Sigmoid colon (tissue), 7 donors: ENCODE measurements at regions of chr19 and their contacts with region 1.

Region 1: DNA sequence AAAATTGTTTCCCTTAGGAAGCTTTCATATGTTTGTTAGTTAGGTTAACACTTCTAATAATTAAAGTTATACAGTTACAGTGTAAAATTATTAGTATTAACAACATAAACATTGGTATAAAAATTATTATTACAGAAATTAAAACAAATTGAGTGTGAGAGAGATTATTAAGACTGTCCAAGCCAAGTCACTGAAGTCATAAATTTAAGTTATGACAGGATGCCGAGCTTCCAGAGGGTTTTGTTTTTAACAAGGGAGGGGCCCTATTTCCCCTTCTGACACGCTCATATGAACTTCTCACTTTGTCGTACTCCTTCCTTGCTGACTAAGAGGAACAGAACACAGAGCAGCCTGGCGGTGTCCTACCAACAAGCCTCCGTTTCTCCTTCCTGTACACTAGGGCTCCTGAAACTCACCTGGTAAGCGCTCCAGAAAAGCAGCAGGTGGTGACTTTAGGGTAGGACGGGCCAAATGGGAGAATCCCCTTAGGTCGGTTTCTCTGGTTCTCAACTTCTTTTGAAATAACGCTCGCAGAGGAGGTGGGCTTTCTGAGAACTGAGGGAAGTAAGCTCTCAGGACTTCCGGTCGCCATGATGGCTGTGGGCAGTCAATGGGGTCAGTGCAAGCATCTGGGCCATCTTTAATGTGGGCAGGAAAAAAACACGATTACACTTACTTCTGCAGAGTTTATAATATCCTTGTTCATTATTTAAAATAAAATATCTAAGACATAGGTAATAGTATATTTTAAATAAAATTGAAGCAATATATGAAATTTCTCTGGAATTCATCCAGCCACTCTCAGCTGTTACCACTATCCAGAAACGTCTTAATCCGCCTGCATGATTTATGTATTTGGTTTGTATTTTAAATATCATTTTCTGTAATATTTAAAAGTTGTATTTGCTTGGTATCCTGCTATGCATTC is at the start of gene CARD8:
- DNase-seq: peak; percentile 89
- H3K4me3 ChIP-seq: peak within 1 kb of the TSS; percentile 41 to 63 (median 59)
- H3K27ac ChIP-seq: peak within 1 kb of the TSS; percentile 88 to 90 (median 88)
- H3K4me1 ChIP-seq: peaks cover 0 to 27% (median 18%) of the 10 kb centered on the region in 4 donors
- H3K27me3 ChIP-seq: no peaks in the 10 kb centered on the region
- CTCF ChIP-seq: peak in 2 of 4 experiments; percentile 20 to 46
- EP300 ChIP-seq: no peak
- POLR2A ChIP-seq: peak; percentile 18 to 26
- total RNA-seq, gene CARD8: 14.2 to 37.7 (median 24.7) TPM

Region 2: DNA sequence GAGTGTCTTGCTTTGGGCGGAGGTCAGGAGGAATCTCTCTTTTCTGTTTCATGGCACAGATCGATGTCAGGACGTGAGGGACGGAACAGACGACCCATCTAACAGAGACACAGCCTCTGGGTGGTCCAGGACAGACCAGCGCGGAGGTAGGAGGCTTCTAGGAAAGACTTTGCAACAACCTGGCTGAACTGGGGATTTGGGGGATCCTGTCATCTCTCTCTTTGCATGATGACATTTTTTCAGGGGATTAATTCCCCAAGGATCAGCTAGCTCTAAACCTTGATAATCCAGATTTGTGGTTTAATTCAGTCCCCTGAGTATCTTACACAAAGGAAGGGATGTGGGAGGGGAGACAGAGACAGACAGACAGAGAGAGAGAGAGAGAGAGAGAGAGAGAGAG is 226.2 kb before region 1 on chr19:
- intact Hi-C with region 1: no loop called
- DNase-seq: no peak
- H3K4me3 ChIP-seq: no peak overlapping the region
- H3K27ac ChIP-seq: no peak overlapping the region
- H3K4me1 ChIP-seq: no peaks in the 10 kb centered on the region
- H3K27me3 ChIP-seq: peaks cover 2 to 14% (median 6%) of the 10 kb centered on the region in 3 donors
- CTCF ChIP-seq: no peak
- EP300 ChIP-seq: no peak
- POLR2A ChIP-seq: no peak

Region 3: DNA sequence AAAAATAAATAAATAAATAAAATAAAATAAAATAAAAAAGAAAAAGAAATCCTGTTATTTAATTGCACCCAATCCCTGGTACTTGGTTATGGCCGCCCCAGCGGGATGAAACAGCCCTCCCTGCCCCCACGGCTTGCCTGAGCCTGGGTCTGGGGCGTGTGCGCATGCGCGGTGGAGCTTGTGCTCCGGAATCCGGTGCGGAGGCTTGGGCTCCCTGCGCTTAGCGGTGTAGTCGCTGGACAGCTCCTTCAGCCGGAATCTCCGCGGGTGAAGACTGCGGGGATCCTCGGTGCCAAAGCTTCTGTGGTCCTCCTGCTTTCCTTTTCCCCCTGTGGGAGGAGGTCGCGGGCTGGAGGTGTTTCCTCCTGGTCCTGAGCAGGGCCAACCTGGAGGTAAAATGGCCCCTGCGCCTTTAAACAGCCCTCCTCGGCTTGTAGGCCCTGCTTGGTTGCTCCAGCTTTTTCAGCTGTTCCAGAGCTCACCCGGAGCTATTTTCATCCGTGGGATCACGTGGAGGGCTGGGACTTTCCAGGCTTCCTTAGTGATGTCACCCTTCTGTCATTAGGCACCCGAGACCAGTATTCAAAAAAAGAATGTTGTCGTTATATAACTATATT is 145.2 kb before region 1 on chr19 and contains the start of gene PLA2G4C:
- intact Hi-C with region 1: loop called (anchors 5 kb)
- DNase-seq: peak; percentile 96
- H3K4me3 ChIP-seq: peak within 1 kb of the TSS; percentile 30 to 56 (median 48)
- H3K27ac ChIP-seq: peak within 1 kb of the TSS; percentile 89 to 95 (median 94)
- H3K4me1 ChIP-seq: peaks cover 0 to 32% (median 28%) of the 10 kb centered on the region in 4 donors
- H3K27me3 ChIP-seq: no peaks in the 10 kb centered on the region
- CTCF ChIP-seq: no peak
- EP300 ChIP-seq: peak in 1 of 4 donors; percentile 75
- POLR2A ChIP-seq: peak; percentile 24 to 51
- total RNA-seq, gene PLA2G4C: 11.8 to 18.5 (median 13.1) TPM

Region 4: DNA sequence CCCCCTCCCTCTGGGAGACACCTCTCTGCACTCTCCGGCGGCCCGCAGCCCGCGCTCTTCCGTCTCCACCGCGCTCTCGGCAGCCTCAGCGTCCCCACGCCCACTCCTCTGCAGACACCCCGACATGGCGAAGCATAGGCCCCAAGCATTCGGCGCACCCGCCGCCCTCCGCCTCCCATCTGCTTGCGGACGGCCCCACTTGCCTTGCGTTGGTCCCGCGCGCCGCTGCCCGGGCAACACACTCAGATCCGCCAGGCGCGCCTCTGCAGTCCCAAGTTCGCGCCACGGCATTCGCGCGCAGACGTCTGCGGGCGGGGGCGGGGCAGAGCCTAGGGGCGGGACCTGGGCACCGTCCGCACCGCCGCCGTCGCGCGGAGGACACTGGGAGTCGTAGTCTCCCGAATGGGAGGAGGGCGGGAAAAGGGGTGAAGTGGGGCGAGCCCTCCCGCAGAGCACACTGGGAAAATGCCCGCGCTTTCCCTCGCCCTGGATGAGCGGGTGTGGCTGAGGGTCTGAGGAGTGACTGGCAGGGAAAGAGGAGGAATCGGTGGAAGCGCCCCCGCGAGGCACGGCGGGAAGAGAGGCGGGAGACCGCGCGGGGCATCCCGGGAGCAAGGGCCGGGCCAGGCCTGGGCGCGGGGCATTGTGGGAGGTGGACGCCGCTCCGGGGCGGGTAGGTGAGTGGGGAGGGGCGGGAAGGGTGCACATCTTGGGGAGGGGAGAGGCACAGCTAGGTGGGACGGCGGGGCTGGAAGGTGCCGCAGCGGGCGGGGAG is 85.4 kb before region 1 on chr19 and contains the starts of genes LIG1 and ZSWIM9:
- intact Hi-C with region 1: loop called (anchors 5 kb)
- DNase-seq: peak; percentile 94
- H3K4me3 ChIP-seq: peak within 1 kb of the TSS; percentile 70 to 84 (median 80)
- H3K27ac ChIP-seq: peak within 1 kb of the TSS; percentile 83 to 96 (median 87)
- H3K4me1 ChIP-seq: peaks cover 0 to 22% (median 16%) of the 10 kb centered on the region in 4 donors
- H3K27me3 ChIP-seq: no peaks in the 10 kb centered on the region
- CTCF ChIP-seq: no peak
- EP300 ChIP-seq: peak in 1 of 4 donors; percentile 63
- POLR2A ChIP-seq: no peak
- total RNA-seq, gene LIG1: 4.3 to 16.9 (median 6.5) TPM
- total RNA-seq, gene ZSWIM9: 2.4 to 10.0 (median 4.0) TPM

Region 5: DNA sequence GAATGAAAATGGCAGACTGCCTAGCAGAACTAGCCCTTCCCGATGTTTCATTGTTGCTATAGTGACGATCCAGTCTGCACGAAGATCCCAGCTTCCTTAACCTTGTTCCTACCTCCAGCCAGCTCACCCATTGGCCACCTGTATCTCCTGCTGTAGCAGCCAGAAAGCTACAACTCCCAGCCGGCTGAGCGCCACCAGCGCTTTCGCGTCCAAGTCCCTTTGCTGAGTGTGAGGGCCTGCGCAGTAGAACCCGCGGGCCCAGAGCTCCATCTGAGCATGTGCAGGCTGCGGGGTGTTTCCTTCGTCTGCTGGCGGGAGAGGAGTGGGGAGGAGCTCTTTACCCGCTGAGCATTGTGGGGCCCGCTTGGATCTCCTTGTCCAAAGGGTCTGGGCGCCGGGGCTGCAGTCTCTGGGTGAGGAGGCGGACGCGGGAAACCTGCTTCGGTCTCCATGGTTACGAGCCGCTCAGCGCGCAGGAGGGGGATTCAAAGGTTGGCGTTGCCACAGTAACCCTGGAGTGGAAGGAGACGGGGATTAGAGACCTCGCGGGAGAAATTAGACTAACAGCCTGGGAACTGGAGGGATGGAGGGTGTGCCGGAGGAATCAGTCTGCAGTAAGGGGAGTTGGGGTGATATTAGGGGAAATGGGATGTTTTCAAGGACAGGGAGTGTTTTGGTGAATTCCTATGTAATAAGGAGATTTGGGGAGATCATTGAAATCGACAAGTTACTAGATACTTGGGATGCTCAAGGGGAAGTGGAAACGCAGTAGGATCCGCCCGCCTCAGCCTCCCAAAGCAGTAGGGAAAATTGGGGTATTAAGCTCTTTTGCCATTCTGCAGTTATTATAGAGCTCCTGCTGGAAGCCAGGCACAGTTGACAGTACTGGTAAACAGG is 51.7 kb before region 1 on chr19:
- intact Hi-C with region 1: loop called (anchors 5 kb)
- DNase-seq: peak; percentile 96
- H3K4me3 ChIP-seq: peak overlapping the region; percentile 61 to 76 (median 68)
- H3K27ac ChIP-seq: peak overlapping the region; percentile 77 to 79 (median 78)
- H3K4me1 ChIP-seq: peaks cover 0 to 21% (median 15%) of the 10 kb centered on the region in 4 donors
- H3K27me3 ChIP-seq: no peaks in the 10 kb centered on the region
- CTCF ChIP-seq: no peak
- EP300 ChIP-seq: no peak
- POLR2A ChIP-seq: peak in 1 of 2 donors; percentile 35

Region 6: DNA sequence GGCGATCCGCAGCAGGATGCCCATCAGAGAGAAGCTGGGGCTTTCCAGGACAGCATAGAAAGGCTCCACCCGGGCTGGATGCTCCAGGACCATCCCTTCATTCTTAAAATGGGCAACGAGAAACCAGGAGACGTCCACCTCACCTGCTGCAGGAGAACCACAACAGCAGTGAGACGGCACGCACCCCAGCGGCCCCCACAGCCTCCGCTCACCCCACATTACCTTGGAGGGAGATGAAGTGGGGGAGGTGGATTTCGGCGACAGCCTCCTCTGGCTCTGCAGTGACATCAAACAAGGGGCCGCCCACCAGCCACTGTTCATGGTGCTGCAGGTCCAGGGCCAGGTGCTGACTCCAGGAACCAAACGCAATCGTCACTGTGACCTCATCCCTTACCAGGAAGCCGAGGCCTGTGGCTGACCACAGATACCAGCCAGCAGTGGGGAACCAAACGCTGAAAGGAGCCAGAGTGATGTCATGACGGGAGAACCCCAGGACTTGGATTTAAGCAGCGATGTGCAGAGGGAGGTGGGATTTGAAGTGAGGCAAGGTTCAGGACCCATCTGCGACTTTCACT is 25.0 kb before region 1 on chr19:
- intact Hi-C with region 1: no loop called
- DNase-seq: no peak
- H3K4me3 ChIP-seq: no peak overlapping the region
- H3K27ac ChIP-seq: no peak overlapping the region
- H3K4me1 ChIP-seq: no peaks in the 10 kb centered on the region
- H3K27me3 ChIP-seq: no peaks in the 10 kb centered on the region
- CTCF ChIP-seq: no peak
- EP300 ChIP-seq: no peak
- POLR2A ChIP-seq: no peak